Dorsolateral prefrontal cortex (tissue), 120 donors: ENCODE measurements at regions of chr15 and their contacts with region 1.

Region 1: GRCh38 chr15:37134699-37135131 is 34.4 kb upstream of the MEIS2 start:
- DNase-seq: no peak
- H3K4me3 ChIP-seq: no peak overlapping the region
- H3K27ac ChIP-seq: no peak overlapping the region
- H3K27me3 ChIP-seq: peaks cover 0 to 5% (median 0%) of the 10 kb centered on the region in 45 donors
- CTCF ChIP-seq: peak; percentile 56 to 85 (median 74)

Region 2: DNA sequence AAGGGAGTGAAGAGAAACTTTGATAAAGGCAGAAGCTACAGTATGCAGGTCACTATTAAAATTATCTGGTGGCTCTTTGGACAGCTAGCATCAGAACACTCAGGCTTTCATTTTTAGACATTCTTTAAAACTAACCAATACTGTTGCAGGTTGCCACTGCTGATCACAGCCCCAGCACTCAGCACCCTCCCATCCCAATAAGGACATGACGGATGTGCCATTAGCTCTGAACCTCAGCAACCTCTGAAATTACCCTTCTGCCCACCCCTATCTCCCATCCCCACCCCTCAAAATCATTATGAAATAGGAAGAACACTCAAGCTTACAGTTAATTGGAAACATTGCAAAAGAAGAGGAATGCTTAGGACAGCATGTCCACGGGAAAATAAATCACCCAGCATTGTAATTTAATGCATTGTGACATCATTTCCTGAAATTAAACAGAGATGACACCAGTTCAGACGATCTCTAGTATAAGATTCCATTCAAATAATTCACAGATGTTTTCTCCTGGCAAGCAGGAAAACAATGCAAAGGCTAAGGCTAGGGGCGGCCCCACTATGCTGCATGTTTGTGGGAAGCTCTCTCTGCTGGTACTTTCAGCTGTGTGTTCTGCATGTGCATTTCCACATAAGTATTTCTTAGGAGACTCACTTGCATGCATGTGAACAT is 106.0 kb before region 1 on chr15:
- intact Hi-C with region 1: no loop called
- DNase-seq: no peak
- H3K4me3 ChIP-seq: no peak overlapping the region
- H3K27ac ChIP-seq: peak overlapping the region in 6 of 59 donors; percentile 1 to 35 (median 26)
- H3K27me3 ChIP-seq: no peaks in the 10 kb centered on the region
- CTCF ChIP-seq: no peak

Region 3: DNA sequence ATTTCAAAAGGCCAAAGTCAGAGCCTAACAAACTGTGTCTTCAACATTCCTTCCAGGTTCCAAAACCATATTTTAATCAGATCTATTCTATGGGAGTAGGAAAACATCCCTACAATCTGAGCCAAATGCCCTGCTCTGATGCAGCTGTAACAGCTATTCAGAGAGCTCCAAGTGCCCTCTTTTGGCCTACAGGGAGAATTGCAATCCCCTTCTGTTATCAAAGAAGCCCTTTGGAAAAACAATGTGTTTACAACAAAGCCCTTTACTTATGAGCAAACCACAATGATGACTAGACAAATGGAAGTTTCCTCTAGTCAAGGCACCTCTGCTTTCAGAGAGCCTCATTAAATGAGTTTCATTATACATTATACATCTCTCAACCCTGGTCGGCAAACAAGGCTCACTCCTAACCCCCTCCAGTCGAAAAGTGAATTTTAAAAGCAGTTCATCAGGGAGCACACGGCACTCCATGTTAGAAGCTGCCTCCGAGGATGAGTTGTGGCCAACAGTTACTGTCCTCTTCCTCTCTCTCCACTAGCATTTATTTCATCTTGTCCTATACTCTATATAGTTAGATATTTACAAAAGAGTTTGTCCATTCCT is 757.2 kb after region 1 on chr15:
- intact Hi-C with region 1: loop called in 1 of 2 experiments (anchors 10 kb)
- DNase-seq: peak in 3 of 10 donors; percentile 4 to 42 (median 36)
- H3K4me3 ChIP-seq: peak overlapping the region in 13 of 59 donors; percentile 3 to 39 (median 23)
- H3K27ac ChIP-seq: peak overlapping the region in 5 of 59 donors; percentile 6 to 42 (median 16)
- H3K27me3 ChIP-seq: peaks cover 0 to 3% (median 0%) of the 10 kb centered on the region in 45 donors
- CTCF ChIP-seq: peak; percentile 34 to 93 (median 78)